Cardiac septum (tissue), 1 donor: ENCODE measurements at regions of chr17 and their contacts with region 1.

Region 1: GRCh38 chr17:41688699-41689496 is at the start of gene EIF1:
- DNase-seq: peak; percentile 100
- total RNA-seq, gene EIF1: 1,014 TPM

Region 2: GRCh38 chr17:41655611-41656351 is 33.1 kb before region 1 on chr17:
- intact Hi-C with region 1: no loop called
- DNase-seq: no peak

Region 3: DNA sequence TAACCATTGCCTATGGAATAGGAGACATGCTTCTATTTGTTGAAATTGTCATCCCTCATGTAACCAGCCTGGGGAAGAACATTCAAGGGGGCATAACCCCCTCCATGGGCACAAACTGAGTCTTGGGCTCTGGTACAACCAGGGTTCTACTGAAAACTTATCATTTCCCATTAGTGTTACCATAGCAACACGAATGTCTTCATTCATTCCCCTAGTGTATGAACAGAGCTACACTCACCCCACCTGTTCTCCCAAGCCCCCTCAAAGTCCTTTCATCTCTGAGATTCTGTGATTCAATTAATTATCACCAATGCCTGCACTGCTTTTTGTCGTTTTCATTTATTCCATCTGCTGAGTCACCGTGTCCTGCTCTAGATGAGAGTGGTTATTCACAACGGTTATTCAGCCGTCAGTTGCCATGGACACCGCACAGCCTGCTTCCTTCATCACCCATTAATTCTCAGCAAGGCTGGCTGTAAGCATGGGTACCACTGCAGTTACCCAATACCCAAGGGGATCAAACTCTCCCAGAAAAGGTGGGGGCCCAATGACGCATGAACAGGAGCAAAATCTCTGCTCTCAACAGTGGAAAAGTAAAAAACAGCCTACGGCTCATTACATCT is 21.7 kb after region 1 on chr17:
- intact Hi-C with region 1: no loop called
- DNase-seq: no peak

Region 4: GRCh38 chr17:41773190-41773588 is 84.3 kb after region 1 on chr17:
- intact Hi-C with region 1: no loop called
- DNase-seq: no peak

Region 5: DNA sequence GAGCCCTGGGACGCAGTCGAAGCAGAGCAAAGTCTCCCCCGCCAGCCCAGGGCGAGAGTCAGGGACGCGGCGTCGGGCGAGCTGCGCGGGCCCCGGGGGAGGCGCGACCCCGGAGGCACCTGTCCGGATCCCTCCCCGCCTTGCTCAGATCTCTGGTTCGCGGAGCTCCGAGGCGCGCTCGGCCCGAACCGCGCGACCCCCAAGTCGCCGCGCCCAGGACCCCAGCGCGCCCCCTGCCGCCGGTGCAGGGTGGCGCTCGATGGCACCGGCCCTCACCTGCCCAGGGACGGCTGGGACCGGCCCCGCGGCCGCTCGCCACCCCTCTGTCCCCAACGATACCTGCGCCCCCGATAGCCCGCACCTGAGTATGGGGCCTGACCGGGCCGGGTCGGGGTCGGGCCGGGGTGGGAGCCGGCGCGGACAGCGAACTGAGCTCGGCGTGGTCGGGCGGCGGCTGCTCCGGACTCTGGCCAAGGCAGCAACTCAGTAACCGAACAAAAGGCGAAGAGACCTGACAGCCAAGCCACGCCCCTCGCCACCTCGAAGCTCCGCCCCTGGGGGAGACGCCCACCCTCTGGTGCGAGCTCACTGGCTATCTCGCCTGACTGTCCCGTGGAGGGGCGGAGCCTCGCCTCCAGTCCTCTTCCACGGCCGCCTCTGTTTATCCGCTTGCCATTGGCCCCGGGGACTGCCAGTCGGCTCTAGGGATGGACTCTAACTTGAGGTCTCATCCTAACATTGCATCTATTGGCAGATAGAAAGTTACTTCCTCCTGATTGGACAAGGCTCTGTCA is 97.5 kb after region 1 on chr17 and contains the start of gene JUP:
- intact Hi-C with region 1: loop called (anchors 2 kb)
- DNase-seq: peak; percentile 99
- total RNA-seq, gene JUP: 150 TPM